ENCODE measurements at regions of chr1 and their contacts with region 1.

Region 1: DNA sequence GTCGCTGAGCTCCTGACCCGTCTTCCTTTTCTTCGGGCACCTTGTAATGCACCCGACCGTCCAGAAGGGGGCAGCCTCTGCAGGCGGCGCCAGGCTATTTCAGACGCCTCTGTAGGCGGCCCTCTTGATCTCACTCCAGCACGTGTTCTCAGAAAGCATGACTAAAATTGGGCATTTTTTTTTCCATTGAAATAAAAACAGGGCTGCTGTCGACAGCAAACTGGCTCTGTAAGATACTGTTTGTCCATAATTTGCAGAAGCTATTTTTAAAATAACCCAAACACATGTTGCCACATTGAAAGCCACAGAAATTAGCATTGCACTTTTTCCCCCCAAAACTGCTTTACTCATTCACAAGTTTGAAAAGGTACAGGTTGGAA is 78.0 kb downstream of the STUM start:
- DNase-seq: peak; percentile 84
- ATAC-seq: peak; percentile 92
- H3K4me3 Mint-ChIP-seq: no peak overlapping the region
- H3K27ac Mint-ChIP-seq: no peak overlapping the region
- H3K4me1 Mint-ChIP-seq: no peaks in the 10 kb centered on the region
- H3K27me3 Mint-ChIP-seq: peaks cover 35% of the 10 kb centered on the region
- CTCF ChIP-seq: peak; percentile 98

Region 2: DNA sequence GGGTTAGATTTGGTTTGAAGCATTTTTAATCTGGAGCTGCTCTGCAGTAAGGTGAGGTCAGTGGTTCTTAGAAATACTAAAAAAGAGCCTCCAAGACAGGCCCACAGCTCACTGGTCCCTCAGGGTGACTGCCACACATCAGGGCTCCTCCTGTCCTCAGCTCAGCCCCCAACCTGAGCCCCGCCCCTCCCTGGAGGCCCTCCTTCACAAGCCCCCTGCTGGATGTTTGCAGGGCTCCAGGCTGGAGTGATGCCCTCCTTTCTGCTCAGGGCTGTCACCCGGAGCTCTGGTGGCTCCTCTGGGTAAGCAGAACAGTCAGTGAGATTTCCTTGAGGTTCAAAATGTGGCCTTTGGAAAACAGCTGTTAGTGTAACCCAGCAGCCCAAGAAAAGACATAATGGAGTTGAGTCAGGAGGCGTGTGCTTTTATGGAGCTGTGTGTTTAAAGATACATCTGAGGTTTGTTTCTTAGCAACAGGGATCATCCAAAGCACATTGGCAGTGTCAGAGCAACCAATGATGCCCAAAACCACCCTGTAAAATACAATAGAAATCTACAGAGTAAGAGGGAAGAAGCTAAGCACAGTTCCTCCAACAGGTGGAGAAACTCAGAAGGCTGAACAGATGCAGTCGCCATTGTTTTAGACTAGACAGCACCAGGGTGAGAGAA is 56.6 kb before region 1 on chr1:
- CTCF ChIA-PET with region 1: interaction called, 20 read pairs
- POLR2A ChIA-PET with region 1: no interaction called
- DNase-seq: peak; percentile 77
- ATAC-seq: peak; percentile 94
- H3K4me3 Mint-ChIP-seq: no peak overlapping the region
- H3K27ac Mint-ChIP-seq: no peak overlapping the region
- H3K4me1 Mint-ChIP-seq: peaks cover 13% of the 10 kb centered on the region
- H3K27me3 Mint-ChIP-seq: no peaks in the 10 kb centered on the region; the same call in 1 of the 2 replicates
- CTCF ChIP-seq: no peak

Region 3: DNA sequence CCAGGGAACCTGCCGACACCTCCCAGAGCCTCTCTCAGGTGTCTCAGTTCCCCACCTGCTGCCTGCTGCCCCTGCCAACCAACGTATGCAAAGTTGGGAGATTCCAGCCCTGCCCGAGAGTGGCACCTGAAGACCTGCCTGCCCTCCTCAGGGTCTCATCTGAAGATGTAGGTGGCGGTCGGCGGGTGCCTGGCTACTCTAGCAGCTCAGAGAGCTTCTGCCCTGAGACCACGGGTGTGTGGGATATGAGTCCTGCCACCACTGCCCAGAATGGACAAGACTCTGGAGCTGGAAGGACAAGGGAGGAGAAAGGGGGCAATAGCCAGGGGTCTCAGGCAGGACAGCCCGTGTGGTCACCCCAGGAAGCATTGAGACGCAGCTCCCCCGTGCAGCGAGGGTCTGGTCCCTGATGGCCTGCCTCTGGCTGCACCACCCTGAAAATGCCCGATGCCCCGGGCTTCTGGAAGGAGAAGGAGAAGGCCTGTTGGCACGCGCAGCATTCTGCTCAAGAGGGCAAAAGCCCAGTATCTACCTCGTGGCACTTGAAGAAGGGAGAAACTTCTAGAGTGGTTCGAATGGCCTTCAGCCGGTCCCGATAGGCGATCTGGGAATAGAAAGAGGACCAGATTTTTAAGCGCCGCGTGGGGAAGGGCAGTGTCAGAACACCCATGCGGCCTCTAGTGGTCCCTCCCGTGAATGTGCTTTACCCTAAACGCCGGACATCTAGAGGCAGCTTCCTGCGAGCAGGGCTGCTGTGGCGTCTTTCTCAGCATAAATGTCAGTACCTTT is 10.8 kb after region 1 on chr1:
- CTCF ChIA-PET with region 1: interaction called, 18 read pairs
- POLR2A ChIA-PET with region 1: interaction called, 3 read pairs
- DNase-seq: peak; percentile 33
- ATAC-seq: peak; percentile 33
- H3K4me3 Mint-ChIP-seq: no peak overlapping the region
- H3K27ac Mint-ChIP-seq: no peak overlapping the region
- H3K4me1 Mint-ChIP-seq: peaks cover 23% of the 10 kb centered on the region
- H3K27me3 Mint-ChIP-seq: no peaks in the 10 kb centered on the region
- CTCF ChIP-seq: no peak

Region 4: GRCh38 chr1:226656601-226657277 is 30.2 kb after region 1 on chr1:
- CTCF ChIA-PET with region 1: interaction called, 12 read pairs
- POLR2A ChIA-PET with region 1: no interaction called
- DNase-seq: no peak
- ATAC-seq: no peak
- H3K4me3 Mint-ChIP-seq: no peak overlapping the region
- H3K27ac Mint-ChIP-seq: peak overlapping the region; percentile 76
- H3K4me1 Mint-ChIP-seq: peaks cover 78% of the 10 kb centered on the region
- H3K27me3 Mint-ChIP-seq: no peaks in the 10 kb centered on the region; the same call in 1 of the 2 replicates
- CTCF ChIP-seq: no peak

Region 5: GRCh38 chr1:226804907-226805759 is 178.6 kb after region 1 on chr1:
- CTCF ChIA-PET with region 1: interaction called, 10 read pairs
- POLR2A ChIA-PET with region 1: no interaction called
- DNase-seq: no peak
- ATAC-seq: no peak
- H3K4me3 Mint-ChIP-seq: no peak overlapping the region
- H3K27ac Mint-ChIP-seq: no peak overlapping the region
- H3K4me1 Mint-ChIP-seq: no peaks in the 10 kb centered on the region
- H3K27me3 Mint-ChIP-seq: no peaks in the 10 kb centered on the region
- CTCF ChIP-seq: no peak

Measured in WTC11 (cell line).